ENCODE measurements at regions of chr10 and their contacts with region 1.

Region 1: DNA sequence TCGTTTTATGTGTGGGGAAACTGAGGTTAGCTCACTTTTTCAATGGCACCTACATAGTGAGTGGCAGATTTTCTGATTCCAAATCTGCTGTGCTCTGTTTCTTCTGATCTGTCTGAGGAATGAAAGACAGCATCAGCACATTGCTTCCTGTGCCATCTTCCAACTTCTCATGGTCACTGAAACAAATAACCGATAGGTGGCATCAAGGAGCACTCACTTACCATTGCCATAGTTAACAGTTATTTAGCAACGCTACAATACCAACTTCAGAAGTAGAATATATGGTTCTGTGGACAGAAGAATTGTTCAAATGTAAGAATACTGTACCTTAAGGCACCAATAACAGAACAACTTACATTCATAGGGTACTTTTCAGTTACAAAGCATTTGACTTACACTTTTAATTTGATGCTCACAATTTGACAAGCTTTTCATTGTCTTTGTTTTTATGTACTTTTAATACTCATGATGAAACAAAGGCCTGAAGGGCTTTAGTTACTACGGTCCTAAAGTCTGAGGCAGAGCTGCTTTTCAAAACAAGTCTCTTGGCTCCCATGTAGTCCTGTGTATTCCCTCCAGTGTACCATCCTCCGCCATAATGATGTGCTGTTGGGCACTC is 228.9 kb upstream of the TCF7L2 start:
- DNase-seq: no peak
- H3K4me3 ChIP-seq: no peak overlapping the region
- CTCF ChIP-seq: peak; percentile 63

Region 2: GRCh38 chr10:112708461-112708860 is 12.7 kb before region 1 on chr10:
- CTCF ChIA-PET with region 1: interaction called, 14 read pairs
- POLR2A ChIA-PET with region 1: no interaction called
- DNase-seq: no peak
- H3K4me3 ChIP-seq: no peak overlapping the region
- CTCF ChIP-seq: no peak

Region 3: DNA sequence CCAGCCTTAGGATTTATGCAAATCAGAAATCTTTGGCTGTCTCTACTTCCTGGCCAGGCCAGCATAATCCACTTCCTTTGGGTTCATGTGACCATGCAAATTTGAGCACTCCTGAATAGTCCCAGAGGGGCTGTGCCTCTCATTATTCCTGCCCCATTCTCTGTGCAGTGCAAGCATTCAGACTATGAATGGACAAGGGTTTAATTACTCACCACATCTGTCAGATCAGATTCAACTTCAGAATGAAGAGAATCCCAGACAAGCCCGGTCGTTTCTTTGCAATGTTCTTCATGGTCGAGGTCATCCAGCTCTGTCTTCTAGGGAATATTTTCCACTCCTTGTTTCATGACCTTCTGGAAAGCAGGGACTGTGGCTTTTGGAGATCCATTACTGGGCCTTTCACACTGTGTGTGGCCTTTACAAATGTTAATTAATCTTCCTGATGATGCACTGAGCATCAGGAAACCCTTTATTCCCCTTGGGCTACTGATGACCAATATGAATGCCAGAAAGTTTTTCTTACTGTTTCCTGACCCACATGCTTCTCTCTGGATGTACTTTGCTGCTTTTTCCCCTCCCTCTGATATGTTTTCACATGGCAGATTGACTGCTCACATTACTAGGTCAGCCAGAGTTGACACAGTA is 11.2 kb after region 1 on chr10:
- CTCF ChIA-PET with region 1: interaction called, 16 read pairs
- POLR2A ChIA-PET with region 1: no interaction called
- DNase-seq: no peak
- H3K4me3 ChIP-seq: no peak overlapping the region
- CTCF ChIP-seq: no peak

Region 4: GRCh38 chr10:112768121-112768520 is 46.9 kb after region 1 on chr10:
- CTCF ChIA-PET with region 1: no interaction called
- POLR2A ChIA-PET with region 1: no interaction called
- DNase-seq: no peak
- H3K4me3 ChIP-seq: no peak overlapping the region
- CTCF ChIP-seq: no peak

Region 5: GRCh38 chr10:112883360-112884178 is 162.4 kb after region 1 on chr10:
- CTCF ChIA-PET with region 1: no interaction called
- POLR2A ChIA-PET with region 1: no interaction called
- DNase-seq: no peak
- H3K4me3 ChIP-seq: no peak overlapping the region
- CTCF ChIP-seq: no peak

Measured in AG04449 (cell line).